ENCODE measurements at regions of chr18 and their contacts with region 1.

Region 1: GRCh38 chr18:51751901-51752300 is 554.4 kb upstream of the MEX3C start:
- DNase-seq: no peak
- ATAC-seq: peak; percentile 89
- H3K4me3 ChIP-seq: no peak overlapping the region
- H3K27ac ChIP-seq: no peak overlapping the region
- H3K4me1 ChIP-seq: no peaks in the 10 kb centered on the region
- H3K27me3 ChIP-seq: no peaks in the 10 kb centered on the region
- CTCF ChIP-seq: no peak
- EP300 ChIP-seq: peak; percentile 24 to 69; a peak in 2 of 4 replicates
- POLR2A ChIP-seq: no peak
- RAD21 ChIP-seq: no peak

Region 2: DNA sequence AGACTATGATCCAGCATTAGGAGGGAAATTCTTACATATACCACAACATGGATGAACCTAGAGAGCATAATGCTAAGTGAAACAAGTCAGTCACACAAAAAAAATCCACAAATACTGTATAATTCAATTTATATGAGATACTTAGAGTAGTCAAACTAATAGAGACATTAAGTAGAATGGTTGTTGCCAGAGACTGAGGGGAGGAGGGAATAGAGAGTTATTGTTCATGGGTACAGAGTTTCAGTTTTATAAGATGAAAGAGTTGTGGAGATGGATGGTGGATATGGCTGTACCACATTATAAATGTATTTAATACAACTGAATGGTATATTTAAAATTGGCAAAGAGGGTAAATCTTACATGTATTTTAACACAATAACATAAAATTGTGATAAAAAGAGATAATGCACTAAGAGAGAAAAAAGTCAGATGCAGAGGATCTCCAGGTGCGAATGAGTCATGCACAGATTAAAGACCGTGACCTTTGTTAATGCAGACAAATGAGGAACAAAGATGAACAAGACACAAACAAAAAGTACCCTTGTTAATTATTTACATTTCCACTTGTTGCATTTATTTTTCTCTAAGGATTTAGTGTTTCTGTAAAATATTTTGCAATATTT is 12.7 kb before region 1 on chr18:
- CTCF ChIA-PET with region 1: interaction called, 5 read pairs
- POLR2A ChIA-PET with region 1: interaction called, 3 read pairs
- RAD21 ChIA-PET with region 1: interaction called, 3 read pairs
- SMC1A ChIA-PET with region 1: interaction called, 32 read pairs
- in situ Hi-C with region 1: no loop called
- intact Hi-C with region 1: no loop called
- DNase-seq: no peak
- ATAC-seq: peak; percentile 91
- H3K4me3 ChIP-seq: no peak overlapping the region
- H3K27ac ChIP-seq: no peak overlapping the region
- H3K4me1 ChIP-seq: no peaks in the 10 kb centered on the region; the same call in 1 of the 2 replicates
- H3K27me3 ChIP-seq: no peaks in the 10 kb centered on the region
- CTCF ChIP-seq: no peak
- EP300 ChIP-seq: peak; percentile 70 to 87
- POLR2A ChIP-seq: no peak
- RAD21 ChIP-seq: no peak

Measured in GM12878 (cell line).